ENCODE measurements at regions of chr22 and their contacts with region 1.

Region 1: DNA sequence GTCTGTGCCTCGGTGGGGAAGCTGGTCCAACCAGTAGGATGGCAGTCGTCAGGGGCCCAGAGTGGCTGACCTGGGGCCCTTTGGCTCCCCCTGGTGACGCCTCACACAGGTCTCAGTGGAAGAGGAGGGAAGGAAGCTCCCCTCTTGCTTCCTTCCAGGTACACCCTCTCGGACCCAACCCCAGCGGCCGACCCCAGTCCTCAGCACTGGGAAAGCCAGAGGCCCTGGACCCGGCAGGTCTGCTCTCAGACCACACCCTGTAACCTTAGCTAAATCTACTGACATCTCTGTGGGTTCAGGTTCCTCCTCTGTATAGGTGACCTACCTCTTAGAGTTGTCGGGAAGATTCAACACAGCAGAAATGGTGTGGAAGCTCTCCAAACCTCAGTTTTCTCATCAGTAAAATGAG is 3.4 kb upstream of the SCUBE1 start:
- DNase-seq: peak; percentile 20 to 77 (median 53)
- ATAC-seq: peak; percentile 64 to 73 (median 68)
- H3K4me3 ChIP-seq: no peak overlapping the region
- H3K4me3 Mint-ChIP-seq: no peak overlapping the region
- H3K27ac ChIP-seq: no peak overlapping the region
- H3K27ac Mint-ChIP-seq: peak overlapping the region in 1 of 2 donors; percentile 15
- H3K4me1 ChIP-seq: peaks cover 0 to 16% of the 10 kb centered on the region in 2 experiments
- H3K4me1 Mint-ChIP-seq: peaks cover 6 to 27% (median 17%) of the 10 kb centered on the region in 3 donors
- H3K27me3 ChIP-seq: peaks cover 0 to 59% of the 10 kb centered on the region in 2 experiments
- H3K27me3 Mint-ChIP-seq: peaks cover 57 to 59% of the 10 kb centered on the region in 2 donors

Region 2: DNA sequence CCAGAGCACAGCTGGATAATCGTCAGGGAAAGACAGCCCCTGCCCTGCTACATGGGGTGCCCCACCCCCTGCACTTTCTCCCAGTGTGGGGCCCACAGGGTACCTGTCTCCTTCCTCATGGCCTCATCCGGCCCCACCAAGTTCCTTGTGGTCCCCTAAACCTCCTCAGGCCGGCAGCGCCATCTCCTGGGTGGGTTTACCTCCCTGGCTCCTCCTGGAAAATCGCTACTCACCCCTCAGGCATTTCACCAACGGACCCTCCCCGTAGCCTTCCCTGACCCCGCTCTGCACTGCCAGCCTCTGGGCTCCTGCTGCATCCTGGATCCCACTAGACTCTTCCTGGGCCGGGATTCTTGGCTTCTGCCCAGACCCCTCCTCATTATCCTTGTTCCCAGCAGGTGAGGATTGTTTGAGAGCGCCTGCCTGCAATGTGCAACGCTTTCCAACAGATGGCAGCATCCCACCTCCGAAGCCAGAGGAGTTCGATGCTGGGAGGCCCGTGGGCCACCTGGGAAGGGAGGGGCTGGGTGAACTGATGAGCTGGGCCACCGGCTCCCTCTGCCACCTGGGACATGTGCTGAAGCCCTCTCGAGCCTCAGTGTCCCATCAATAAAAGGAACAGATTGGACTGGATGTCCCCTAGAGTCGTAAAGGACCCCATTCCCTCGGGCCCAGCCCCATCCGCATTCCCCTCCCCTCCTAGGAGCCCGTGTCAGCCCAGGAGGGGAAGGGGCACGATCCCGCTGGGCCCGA is 115.4 kb before region 1 on chr22:
- CTCF ChIA-PET with region 1: interaction called, 13 to 20 read pairs
- POLR2A ChIA-PET with region 1: no interaction called
- DNase-seq: peak; percentile 8 to 80 (median 56)
- ATAC-seq: peak; percentile 63 to 75 (median 69)
- H3K4me3 ChIP-seq: no peak overlapping the region
- H3K4me3 Mint-ChIP-seq: no peak overlapping the region
- H3K27ac ChIP-seq: no peak overlapping the region
- H3K27ac Mint-ChIP-seq: peak overlapping the region in 1 of 2 donors; percentile 4
- H3K4me1 ChIP-seq: peaks cover 0 to 13% of the 10 kb centered on the region in 2 experiments
- H3K4me1 Mint-ChIP-seq: peaks cover 3 to 5% (median 5%) of the 10 kb centered on the region in 3 donors
- H3K27me3 ChIP-seq: peaks cover 0 to 46% of the 10 kb centered on the region in 2 experiments
- H3K27me3 Mint-ChIP-seq: peaks cover 4 to 6% of the 10 kb centered on the region in 2 donors

Region 3: DNA sequence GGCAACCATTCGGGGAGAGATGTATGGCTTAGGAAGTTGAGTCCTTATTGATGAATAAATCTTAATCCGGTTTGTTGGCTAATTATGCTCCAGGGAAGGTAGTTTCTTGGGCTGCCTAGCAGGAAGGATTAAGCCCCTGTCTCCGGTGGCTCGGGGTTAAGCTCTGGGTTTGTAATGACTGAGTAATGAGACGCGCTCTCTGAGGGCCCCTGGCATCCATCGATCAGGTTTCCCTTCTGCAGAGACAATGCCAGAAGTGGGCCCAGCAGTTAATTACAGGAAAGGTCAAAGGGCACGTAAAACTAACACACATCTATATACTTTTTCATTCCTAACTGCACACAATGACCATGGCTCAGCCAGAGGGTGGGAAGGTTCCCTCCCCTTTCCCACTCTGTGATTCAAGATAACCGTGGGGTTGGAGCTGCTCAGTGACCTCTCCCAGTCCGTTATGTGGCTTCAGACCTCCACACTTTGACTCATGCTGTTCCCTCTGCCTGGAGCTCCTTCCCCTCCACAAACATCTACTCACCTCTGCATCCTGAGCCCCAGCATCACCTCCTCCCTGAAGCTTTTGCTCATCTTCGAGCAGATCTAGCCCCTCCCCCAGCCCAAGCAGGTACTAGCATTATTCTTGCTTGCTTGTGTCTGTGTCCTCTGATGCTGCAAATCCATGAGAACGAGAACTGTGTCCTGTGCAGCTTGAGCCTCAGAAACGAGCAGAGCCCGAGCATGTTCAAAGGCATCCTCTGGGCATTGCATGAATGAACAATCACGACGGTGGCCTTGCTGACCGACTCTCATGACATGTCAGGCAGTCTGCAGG is 20.0 kb before region 1 on chr22:
- CTCF ChIA-PET with region 1: no interaction called
- POLR2A ChIA-PET with region 1: no interaction called
- DNase-seq: no peak
- ATAC-seq: no peak
- H3K4me3 ChIP-seq: no peak overlapping the region
- H3K4me3 Mint-ChIP-seq: no peak overlapping the region
- H3K27ac ChIP-seq: no peak overlapping the region
- H3K27ac Mint-ChIP-seq: no peak overlapping the region
- H3K4me1 ChIP-seq: no peaks in the 10 kb centered on the region
- H3K4me1 Mint-ChIP-seq: peaks cover 0 to 4% (median 4%) of the 10 kb centered on the region in 3 donors
- H3K27me3 ChIP-seq: peaks cover 0 to 10% of the 10 kb centered on the region in 2 experiments
- H3K27me3 Mint-ChIP-seq: peaks cover 0 to 9% of the 10 kb centered on the region in 2 donors